H1 (cell line): ENCODE measurements at regions of chr17 and their contacts with region 1.

Region 1: GRCh38 chr17:40219073-40219860 is at the start of gene WIPF2:
- DNase-seq: peak; percentile 91 to 98
- H3K4me3 ChIP-seq: peak within 1 kb of the TSS; percentile 79 to 100 (median 86)
- H3K27ac ChIP-seq: peak within 1 kb of the TSS; percentile 87
- H3K4me1 ChIP-seq: 0 out of 7 replicates have a peak, but pooled peaks cover 0 to 3% (median 1%) of the 10 kb centered on the region in 4 experiments
- H3K27me3 ChIP-seq: no peaks in the 10 kb centered on the region
- CTCF ChIP-seq: peak; percentile 55 to 81 (median 69)
- EP300 ChIP-seq: peak in 1 of 2 experiments; percentile 7; a peak in 2 of 3 replicates
- POLR2A ChIP-seq: peak in 1 of 2 experiments; percentile 77; a peak in 2 of 3 replicates
- RAD21 ChIP-seq: peak; percentile 2 to 26; a peak in 2 of 4 replicates
- total RNA-seq, gene WIPF2: 21.1 and 25.3 TPM in 2 replicates

Region 2: DNA sequence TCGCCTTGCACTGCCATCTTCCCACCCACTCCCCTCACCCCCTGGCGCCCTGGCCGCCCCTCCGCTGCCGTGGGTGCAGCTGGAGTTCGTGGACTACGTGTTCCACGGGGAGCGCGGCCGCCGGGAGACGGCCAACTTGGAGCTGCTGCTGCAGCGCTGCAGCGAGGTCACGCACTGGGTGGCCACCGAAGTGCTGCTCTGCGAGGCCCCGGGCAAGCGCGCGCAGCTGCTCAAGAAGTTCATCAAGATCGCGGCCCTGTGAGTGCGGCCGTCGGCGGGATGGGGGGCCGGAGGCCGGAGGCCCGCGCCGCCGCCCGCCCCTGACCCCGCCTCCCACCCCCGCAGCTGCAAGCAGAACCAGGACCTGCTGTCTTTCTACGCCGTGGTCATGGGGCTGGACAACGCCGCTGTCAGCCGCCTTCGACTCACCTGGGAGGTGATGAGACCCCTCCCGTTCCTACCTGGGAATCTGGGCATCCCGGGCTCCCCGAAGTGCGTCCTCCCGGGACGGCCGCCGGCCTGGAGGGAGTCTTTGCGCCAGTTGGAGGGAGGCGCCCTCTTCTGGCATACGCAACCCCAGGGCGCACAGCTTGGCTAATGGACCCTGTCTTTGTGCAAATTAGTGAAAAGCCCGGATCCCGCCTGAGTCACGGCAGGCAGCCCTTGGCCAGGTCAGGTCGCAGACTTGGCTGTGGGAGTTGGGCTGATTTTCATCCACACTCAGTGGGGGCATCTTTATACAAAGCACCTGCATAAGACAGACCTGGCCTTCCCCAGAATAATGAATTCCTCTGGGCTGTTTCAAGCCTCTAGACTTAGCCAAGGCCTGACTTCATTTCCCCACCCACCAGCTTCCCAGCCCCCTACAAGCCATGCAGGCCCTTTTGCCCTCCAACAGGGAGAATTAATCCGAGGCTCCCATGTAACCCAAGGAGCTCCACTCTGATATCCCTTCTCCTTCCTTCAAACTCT is 27.7 kb before region 1 on chr17:
- CTCF ChIA-PET with region 1: interaction called, 9 read pairs
- POLR2A ChIA-PET with region 1: interaction called, 15 read pairs
- DNase-seq: peak; percentile 70 to 87
- H3K4me3 ChIP-seq: peak overlapping the region; percentile 20 to 73 (median 44)
- H3K27ac ChIP-seq: no peak overlapping the region
- H3K4me1 ChIP-seq: peaks cover 0 to 15% (median 8%) of the 10 kb centered on the region in 4 experiments; a peak in 5 of 7 replicates
- H3K27me3 ChIP-seq: no peaks in the 10 kb centered on the region
- CTCF ChIP-seq: peak; percentile 58 to 73 (median 71)
- EP300 ChIP-seq: no peak
- POLR2A ChIP-seq: no peak
- RAD21 ChIP-seq: peak; percentile 32 to 60

Region 3: GRCh38 chr17:40203131-40203530 is 16.1 kb before region 1 on chr17:
- CTCF ChIA-PET with region 1: interaction called, 21 read pairs
- POLR2A ChIA-PET with region 1: interaction called, 9 read pairs
- DNase-seq: no peak
- H3K4me3 ChIP-seq: no peak overlapping the region
- H3K27ac ChIP-seq: no peak overlapping the region
- H3K4me1 ChIP-seq: no peaks in the 10 kb centered on the region
- H3K27me3 ChIP-seq: no peaks in the 10 kb centered on the region
- CTCF ChIP-seq: no peak
- EP300 ChIP-seq: no peak
- POLR2A ChIP-seq: no peak
- RAD21 ChIP-seq: no peak

Region 4: GRCh38 chr17:40281663-40282062 is 62.4 kb after region 1 on chr17:
- CTCF ChIA-PET with region 1: interaction called, 6 read pairs
- POLR2A ChIA-PET with region 1: interaction called, 15 read pairs
- DNase-seq: no peak
- H3K4me3 ChIP-seq: 0 out of 8 replicates have a peak overlapping the region, but pooled peaks of 1 of the 4 experiments have one; percentile 7
- H3K27ac ChIP-seq: peak overlapping the region; percentile 77
- H3K4me1 ChIP-seq: peaks cover 2 to 5% (median 3%) of the 10 kb centered on the region in 4 experiments; a peak in 5 of 7 replicates
- H3K27me3 ChIP-seq: no peaks in the 10 kb centered on the region
- CTCF ChIP-seq: no peak
- EP300 ChIP-seq: peak in 1 of 2 experiments; percentile 66; a peak in 2 of 3 replicates
- POLR2A ChIP-seq: no peak
- RAD21 ChIP-seq: no peak

Region 5: GRCh38 chr17:40399185-40399584 is 179.9 kb after region 1 on chr17:
- CTCF ChIA-PET with region 1: no interaction called
- POLR2A ChIA-PET with region 1: no interaction called
- DNase-seq: no peak
- H3K4me3 ChIP-seq: no peak overlapping the region
- H3K27ac ChIP-seq: no peak overlapping the region
- H3K4me1 ChIP-seq: no peaks in the 10 kb centered on the region
- H3K27me3 ChIP-seq: no peaks in the 10 kb centered on the region
- CTCF ChIP-seq: peak in 2 of 3 experiments; percentile 28 to 39; a peak in 3 of 4 replicates
- EP300 ChIP-seq: no peak
- POLR2A ChIP-seq: no peak
- RAD21 ChIP-seq: peak; percentile 41 to 54; a peak in 3 of 4 replicates

Region 6: GRCh38 chr17:40417609-40418427 is 198.6 kb after region 1 on chr17 and contains the start of gene TOP2A:
- CTCF ChIA-PET with region 1: no interaction called
- POLR2A ChIA-PET with region 1: no interaction called
- DNase-seq: peak; percentile 98 to 99
- H3K4me3 ChIP-seq: peak within 1 kb of the TSS; percentile 81 to 97 (median 95)
- H3K27ac ChIP-seq: peak within 1 kb of the TSS; percentile 55; the same call in 1 of the 2 replicates
- H3K4me1 ChIP-seq: peaks cover 2 to 10% (median 6%) of the 10 kb centered on the region in 4 experiments
- H3K27me3 ChIP-seq: no peaks in the 10 kb centered on the region
- CTCF ChIP-seq: no peak
- EP300 ChIP-seq: no peak
- POLR2A ChIP-seq: 0 out of 3 replicates have a peak, but pooled peaks of 1 of the 2 experiments have one; percentile 53
- RAD21 ChIP-seq: no peak
- total RNA-seq, gene TOP2A: 276 and 291 TPM in 2 replicates